Breast epithelium (tissue), 4 donors: ENCODE measurements at regions of chrX and their contacts with region 1.

Region 1: GRCh38 chrX:88853925-88854324 is 106.9 kb downstream of the CPXCR1 start:
- DNase-seq: no peak
- H3K4me3 ChIP-seq: no peak overlapping the region
- H3K27ac ChIP-seq: no peak overlapping the region
- H3K4me1 ChIP-seq: no peaks in the 10 kb centered on the region
- H3K27me3 ChIP-seq: peaks cover 0 to 5% of the 10 kb centered on the region in 2 donors
- CTCF ChIP-seq: no peak
- POLR2A ChIP-seq: no peak

Region 2: DNA sequence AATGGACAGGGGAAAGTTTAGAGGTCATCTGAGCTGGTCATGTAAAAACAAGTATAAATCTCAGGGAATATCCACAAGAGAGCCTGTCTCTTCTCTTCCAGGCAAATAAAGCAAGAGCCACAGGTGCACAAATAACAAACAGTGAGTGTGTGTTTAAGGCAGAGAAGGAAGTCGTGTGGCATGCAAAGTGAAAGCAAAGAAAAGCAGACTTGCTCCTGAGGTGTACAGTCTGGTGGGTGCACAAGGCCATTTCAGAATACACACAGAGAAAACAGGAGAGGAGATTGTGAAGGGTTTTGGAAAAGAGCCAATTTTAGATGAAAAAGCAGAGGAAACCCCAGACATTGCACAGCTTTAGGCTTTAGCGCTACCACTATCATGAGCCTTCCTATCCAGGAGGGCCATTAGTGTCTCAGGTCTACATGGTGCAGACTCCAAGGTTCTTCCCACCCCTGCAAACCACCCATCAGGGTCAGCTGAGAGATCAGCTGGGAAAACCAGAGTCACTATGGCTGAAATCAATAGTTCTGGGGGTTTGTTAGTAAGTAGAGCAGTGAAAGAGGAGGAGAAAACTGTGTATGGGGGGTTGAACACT is 980.5 kb before region 1 on chrX:
- intact Hi-C with region 1: loop called (anchors 10 kb)
- DNase-seq: no peak
- H3K4me3 ChIP-seq: no peak overlapping the region
- H3K27ac ChIP-seq: no peak overlapping the region
- H3K4me1 ChIP-seq: no peaks in the 10 kb centered on the region
- H3K27me3 ChIP-seq: peaks cover 0 to 9% of the 10 kb centered on the region in 2 donors
- CTCF ChIP-seq: no peak
- POLR2A ChIP-seq: no peak